Activated naive CD4-positive, alpha-beta T cell treated with anti-CD3 and anti-CD28 coated beads for 36 hours (primary cell): ENCODE measurements at regions of chr1 and their contacts with region 1.

Region 1: DNA sequence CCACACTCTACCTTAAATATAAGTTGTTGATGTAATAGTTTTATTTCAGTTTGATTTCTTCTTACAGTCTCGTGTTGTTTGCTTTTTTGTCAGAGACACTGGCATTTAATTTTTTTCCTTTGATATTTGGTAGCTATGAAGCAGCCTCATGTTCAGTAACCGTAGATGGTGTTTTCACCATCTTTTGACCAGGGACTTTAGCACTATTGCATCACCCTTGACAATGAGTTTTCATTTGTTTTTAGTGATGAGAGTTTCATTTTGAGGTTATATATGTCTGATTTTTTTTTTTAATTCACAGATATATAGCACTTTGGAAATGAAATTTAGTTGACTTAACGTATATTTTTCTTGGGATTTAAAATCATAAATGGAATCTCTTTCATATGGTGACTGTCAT is 36.2 kb downstream of the CEP350 start:
- DNase-seq: no peak
- H3K4me3 Mint-ChIP-seq: no peak overlapping the region
- H3K27ac Mint-ChIP-seq: peak overlapping the region; percentile 68
- H3K4me1 Mint-ChIP-seq: peaks cover 11% of the 10 kb centered on the region
- H3K27me3 Mint-ChIP-seq: no peaks in the 10 kb centered on the region

Region 2: DNA sequence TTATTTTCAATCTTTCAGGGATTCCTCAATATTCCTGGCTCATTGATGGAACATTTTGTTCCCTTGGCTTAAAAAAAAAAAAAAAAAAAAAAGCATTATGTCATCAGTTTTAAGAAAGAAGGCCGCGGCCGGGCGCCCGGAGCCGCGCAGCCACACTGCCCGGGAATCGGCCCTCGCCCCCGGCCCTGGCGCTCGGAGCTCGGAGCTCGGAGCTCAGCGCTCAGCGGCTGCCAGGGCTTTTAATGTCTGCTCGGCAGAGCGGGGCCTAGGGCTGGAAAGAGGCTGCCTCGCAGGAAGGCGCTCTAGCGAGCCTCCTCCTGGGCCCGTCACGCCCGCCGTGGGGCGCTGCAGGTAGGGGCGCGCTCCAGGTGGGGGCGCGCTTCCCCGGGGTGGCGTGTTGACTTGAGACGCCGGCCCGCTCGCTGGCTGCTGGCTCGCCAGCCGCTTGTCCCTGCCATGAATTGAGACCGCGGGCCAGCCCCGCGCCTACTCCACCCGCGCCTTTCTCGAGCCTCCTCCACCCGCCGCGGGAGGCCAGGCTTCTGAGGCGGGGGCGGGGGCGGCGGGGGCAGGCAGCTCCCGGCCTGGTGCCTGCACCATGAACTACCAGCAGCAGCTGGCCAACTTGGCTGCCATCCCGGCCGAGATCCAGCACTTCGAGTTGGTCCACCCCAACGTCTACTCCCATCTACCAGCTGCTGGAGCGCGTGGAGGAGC is 404.6 kb before region 1 on chr1:
- CTCF ChIA-PET with region 1: no interaction called
- intact Hi-C with region 1: no loop called
- DNase-seq: peak; percentile 7
- H3K4me3 Mint-ChIP-seq: no peak overlapping the region
- H3K27ac Mint-ChIP-seq: no peak overlapping the region
- H3K4me1 Mint-ChIP-seq: peaks cover 3% of the 10 kb centered on the region
- H3K27me3 Mint-ChIP-seq: peaks cover 52% of the 10 kb centered on the region

Region 3: GRCh38 chr1:179848233-179848632 is 142.6 kb before region 1 on chr1:
- CTCF ChIA-PET with region 1: no interaction called
- intact Hi-C with region 1: no loop called
- DNase-seq: no peak
- H3K4me3 Mint-ChIP-seq: no peak overlapping the region
- H3K27ac Mint-ChIP-seq: no peak overlapping the region
- H3K4me1 Mint-ChIP-seq: peaks cover 2% of the 10 kb centered on the region
- H3K27me3 Mint-ChIP-seq: no peaks in the 10 kb centered on the region

Region 4: DNA sequence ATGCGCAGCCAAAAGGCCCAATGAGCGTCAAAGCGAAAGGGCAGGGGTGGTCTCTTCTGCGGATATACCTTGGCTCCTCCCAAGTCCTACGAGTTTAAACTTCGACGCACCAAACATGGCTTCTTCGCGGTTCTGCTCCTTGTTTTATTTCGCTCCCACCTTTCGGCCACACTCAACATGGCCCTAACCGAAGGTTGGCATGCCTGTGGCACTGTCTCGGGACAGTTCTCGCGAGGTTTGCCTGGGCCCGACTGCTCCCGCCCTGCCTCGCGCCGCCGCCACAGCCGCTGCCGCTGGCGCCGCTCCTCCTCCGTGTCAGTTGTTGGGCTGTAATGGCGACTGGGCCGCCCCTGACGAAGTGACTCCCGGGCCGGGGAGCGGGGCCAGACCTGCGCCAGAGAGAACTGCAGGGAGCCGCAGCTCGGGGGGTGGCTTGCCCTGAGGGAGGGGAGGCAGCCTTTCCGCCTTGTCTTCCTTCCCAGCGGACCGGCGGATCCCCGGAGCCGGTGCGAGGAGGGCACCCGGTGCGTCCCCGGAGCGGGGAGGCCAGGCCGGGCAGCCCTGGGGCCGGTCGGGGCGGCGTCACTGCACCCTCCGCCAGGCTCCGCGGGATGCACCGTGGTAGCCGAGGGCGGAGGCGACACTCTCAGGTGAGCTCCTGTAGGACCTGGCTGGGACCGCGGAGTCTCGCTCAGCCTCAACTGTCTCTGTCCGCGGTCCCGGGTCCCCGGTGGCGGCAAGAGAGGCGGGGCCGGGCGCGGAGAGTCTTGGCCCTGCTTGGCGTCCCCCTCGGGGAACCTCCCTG is 36.2 kb before region 1 on chr1 and contains the start of gene CEP350:
- CTCF ChIA-PET with region 1: no interaction called
- intact Hi-C with region 1: loop called (anchors 1 kb)
- DNase-seq: peak; percentile 99
- H3K4me3 Mint-ChIP-seq: peak within 1 kb of the TSS; percentile 85
- H3K27ac Mint-ChIP-seq: peak within 1 kb of the TSS; percentile 95
- H3K4me1 Mint-ChIP-seq: peaks cover 41% of the 10 kb centered on the region
- H3K27me3 Mint-ChIP-seq: no peaks in the 10 kb centered on the region
- total RNA-seq, gene CEP350: 30.3 to 36.0 TPM